BJ (cell line): ENCODE measurements at regions of chr10 and their contacts with region 1.

Region 1: DNA sequence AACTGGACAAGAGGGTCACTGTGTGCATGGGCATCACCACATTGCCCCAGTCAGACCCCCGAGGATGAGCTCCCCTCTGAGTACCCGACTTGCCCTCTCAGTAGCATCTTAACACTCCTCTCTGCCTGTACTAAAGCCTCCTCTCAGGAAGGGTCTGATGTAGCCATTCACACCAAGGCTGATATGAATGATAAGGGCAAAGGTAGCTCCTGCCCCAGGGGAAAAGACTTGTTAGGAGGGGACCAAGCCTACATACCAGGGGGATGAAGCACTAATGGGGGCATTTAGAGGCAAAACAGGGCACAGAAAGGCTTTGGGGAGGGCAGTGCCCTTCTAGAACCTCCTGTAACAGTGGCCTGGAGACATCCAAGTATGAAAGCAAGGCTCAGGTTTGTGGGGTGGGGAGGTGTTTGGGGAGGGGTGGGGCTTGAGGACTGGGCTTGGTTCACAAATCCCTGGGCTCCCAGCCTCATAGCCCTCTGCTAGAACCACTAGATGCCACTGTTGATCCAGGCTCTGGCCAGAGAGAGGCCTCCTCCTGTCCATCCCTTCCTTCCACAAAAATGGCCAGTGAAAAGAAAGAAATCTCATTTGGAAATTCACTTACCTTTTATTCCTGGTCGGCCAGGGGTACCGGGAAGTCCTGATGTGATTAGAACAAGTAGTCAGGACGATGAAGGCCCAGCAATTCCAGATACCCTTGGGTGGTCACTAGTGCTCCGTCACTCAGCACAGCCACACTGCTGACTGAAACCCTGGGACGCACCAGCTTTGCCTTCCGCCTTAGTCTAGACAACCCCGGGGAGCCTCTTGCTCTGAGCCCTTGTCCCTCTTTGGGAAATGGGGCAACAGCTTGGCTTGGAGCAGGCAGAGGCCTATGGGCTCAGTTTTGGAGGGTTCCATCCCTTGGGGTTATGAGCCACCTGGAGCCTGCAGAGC is 40.3 kb downstream of the COL17A1 start:
- DNase-seq: no peak
- H3K4me3 ChIP-seq: no peak overlapping the region
- H3K27me3 ChIP-seq: no peaks in the 10 kb centered on the region
- CTCF ChIP-seq: peak; percentile 88

Region 2: GRCh38 chr10:102975483-102976379 is 1069.7 kb before region 1 on chr10:
- CTCF ChIA-PET with region 1: no interaction called
- POLR2A ChIA-PET with region 1: no interaction called
- DNase-seq: no peak
- H3K4me3 ChIP-seq: no peak overlapping the region
- H3K27me3 ChIP-seq: no peaks in the 10 kb centered on the region
- CTCF ChIP-seq: no peak

Region 3: DNA sequence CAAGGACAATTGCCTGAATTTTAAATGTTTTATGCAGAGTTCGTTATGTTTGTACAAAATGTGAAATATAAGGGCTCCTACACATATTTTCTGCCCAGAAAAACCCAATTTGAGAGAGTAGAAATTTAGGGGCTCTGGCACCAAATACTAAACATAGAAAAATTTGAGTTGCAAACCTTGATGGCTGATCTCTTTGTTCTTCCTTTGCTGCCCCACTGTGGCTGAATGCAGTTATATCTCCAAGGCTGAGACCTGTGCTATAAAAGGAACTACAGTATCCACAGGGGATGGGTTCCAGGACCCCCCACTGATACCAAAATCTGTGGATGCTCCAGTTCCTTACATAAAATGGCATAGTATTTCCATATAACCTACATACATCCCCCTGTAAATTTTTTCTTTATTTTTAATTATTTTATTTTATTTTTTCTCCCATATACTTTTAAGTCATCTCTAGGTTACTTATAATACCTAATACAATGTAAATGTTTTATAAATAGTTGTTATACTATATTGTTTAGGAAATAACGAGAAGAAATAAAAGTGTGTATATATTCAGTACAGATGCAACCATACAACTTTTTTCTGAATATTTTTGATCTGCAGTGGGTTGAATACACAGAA is 164.3 kb after region 1 on chr10:
- CTCF ChIA-PET with region 1: interaction called, 12 read pairs
- POLR2A ChIA-PET with region 1: no interaction called
- DNase-seq: no peak
- H3K4me3 ChIP-seq: no peak overlapping the region
- H3K27me3 ChIP-seq: peaks cover 1% of the 10 kb centered on the region; the same call in 1 of the 2 replicates
- CTCF ChIP-seq: peak; percentile 65